ENCODE measurements at regions of chr1 and their contacts with region 1.

Region 1: GRCh38 chr1:229625915-229626831 is at the starts of genes TAF5L and URB2:
- DNase-seq: peak; percentile 87
- H3K4me3 Mint-ChIP-seq: peak within 1 kb of the TSS; percentile 97
- H3K27ac Mint-ChIP-seq: peak within 1 kb of the TSS; percentile 95
- H3K4me1 Mint-ChIP-seq: peaks cover 59% of the 10 kb centered on the region
- H3K27me3 Mint-ChIP-seq: no peaks in the 10 kb centered on the region
- total RNA-seq, gene TAF5L: 35.8 and 37.9 TPM in 2 replicates
- total RNA-seq, gene URB2: 37.3 and 38.4 TPM in 2 replicates

Region 2: GRCh38 chr1:229341774-229342655 is 284.2 kb before region 1 on chr1:
- intact Hi-C with region 1: loop called (anchors 1 kb)
- DNase-seq: peak; percentile 82
- H3K4me3 Mint-ChIP-seq: peak overlapping the region; percentile 89
- H3K27ac Mint-ChIP-seq: peak overlapping the region; percentile 87
- H3K4me1 Mint-ChIP-seq: peaks cover 50% of the 10 kb centered on the region
- H3K27me3 Mint-ChIP-seq: peaks cover 21% of the 10 kb centered on the region

Region 3: GRCh38 chr1:229537894-229538293 is 88.3 kb before region 1 on chr1:
- intact Hi-C with region 1: loop called (anchors 1 kb)
- DNase-seq: no peak
- H3K4me3 Mint-ChIP-seq: no peak overlapping the region
- H3K27ac Mint-ChIP-seq: no peak overlapping the region
- H3K4me1 Mint-ChIP-seq: peaks cover 26% of the 10 kb centered on the region
- H3K27me3 Mint-ChIP-seq: peaks cover 2% of the 10 kb centered on the region

Region 4: DNA sequence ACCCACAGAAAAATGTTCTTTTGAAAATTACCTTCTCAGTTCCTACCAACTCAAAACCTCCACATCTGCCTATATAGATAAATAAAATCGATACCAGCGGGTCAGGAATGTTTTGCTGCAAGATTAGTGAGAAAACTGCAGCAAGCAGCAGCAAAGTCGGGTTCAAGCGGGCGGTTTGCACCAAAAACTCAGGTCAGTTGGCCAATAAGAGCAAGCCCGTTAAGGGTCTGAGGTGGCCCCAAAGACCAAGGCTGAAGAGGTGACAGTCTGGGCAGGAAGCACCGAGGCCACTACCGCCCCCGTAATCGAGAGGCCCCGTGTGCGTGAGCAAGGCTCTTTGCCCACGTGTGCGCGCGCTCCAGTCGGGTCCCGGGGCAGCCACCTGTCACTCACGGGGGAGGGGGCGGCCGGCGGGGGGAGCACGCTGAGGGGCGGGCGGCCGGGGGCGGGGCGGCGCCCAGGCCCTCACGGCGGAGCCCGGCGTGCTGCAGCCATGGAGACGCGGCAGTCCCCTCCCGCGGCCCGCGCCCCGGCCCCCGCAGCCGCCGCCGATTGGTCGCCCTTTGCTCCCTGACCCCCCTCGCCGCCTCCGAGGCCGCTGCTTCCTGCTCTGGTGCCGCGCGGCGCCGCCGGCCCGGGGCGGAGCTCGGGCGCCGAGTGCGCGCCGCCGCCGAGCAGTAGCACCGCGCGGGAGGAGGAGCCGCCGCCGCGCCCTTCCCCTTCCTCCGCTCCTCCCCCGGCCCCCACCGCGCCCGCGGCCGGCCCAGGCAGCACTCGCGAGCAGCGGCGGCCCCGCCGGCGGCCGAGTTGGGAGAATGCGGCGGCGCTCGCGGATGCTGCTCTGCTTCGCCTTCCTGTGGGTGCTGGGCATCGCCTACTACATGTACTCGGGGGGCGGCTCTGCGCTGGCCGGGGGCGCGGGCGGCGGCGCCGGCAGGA is 440.6 kb after region 1 on chr1 and contains the start of gene GALNT2:
- intact Hi-C with region 1: loop called (anchors 1 kb)
- DNase-seq: peak; percentile 88
- H3K4me3 Mint-ChIP-seq: peak within 1 kb of the TSS; percentile 93
- H3K27ac Mint-ChIP-seq: peak within 1 kb of the TSS; percentile 89
- H3K4me1 Mint-ChIP-seq: peaks cover 48% of the 10 kb centered on the region
- H3K27me3 Mint-ChIP-seq: peaks cover 3% of the 10 kb centered on the region
- total RNA-seq, gene GALNT2: 67.6 and 67.9 TPM in 2 replicates

Region 5: GRCh38 chr1:230167419-230167852 is 541.3 kb after region 1 on chr1:
- intact Hi-C with region 1: no loop called
- DNase-seq: peak; percentile 12
- H3K4me3 Mint-ChIP-seq: no peak overlapping the region
- H3K27ac Mint-ChIP-seq: no peak overlapping the region
- H3K4me1 Mint-ChIP-seq: peaks cover 39% of the 10 kb centered on the region
- H3K27me3 Mint-ChIP-seq: no peaks in the 10 kb centered on the region

Region 6: DNA sequence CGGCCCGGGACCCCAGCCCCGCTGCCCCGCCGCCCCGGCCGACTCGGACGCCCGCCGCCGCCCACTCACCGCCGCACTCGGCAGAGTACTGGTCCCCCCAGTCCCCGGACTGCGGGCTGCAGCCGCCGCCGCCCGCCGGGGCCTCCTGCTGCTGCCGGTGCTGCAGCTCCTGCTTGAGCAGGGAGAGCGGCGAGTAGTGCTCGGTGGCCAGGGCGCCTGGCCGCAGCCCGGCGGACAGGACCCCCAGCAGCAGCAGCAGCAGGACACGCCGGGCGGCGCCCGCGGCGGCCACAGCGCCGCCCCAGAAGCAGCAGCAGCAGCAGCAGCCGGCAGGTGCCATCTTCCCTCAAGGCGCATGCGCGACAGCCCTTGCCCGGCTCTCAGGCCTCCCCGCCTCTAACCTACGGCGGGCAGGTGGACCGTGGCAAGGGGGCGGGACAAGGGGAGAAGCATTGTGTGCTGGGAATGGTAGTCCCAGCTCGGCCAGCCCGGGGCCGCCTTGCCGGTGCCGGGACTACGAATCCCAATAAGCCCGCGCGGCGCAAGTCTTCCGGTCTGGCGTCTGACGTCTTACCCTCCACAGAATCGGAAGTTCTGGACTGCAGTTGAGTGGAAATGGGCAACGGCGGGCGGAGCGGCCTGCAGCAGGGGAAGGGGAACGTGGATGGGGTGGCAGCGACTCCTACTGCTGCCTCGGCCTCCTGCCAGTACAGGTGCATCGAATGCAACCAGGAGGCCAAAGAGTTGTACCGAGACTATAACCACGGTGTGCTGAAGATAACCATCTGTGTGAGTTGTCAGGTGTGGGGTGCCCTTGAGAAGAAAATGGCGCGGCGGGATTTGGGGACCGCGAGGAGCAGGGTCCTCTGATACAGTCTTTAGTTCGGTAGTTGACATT is 1352.6 kb after region 1 on chr1 and contains the starts of genes ARV1 and TTC13:
- intact Hi-C with region 1: loop called (anchors 5 kb)
- DNase-seq: peak; percentile 97
- H3K4me3 Mint-ChIP-seq: peak within 1 kb of the TSS; percentile 92
- H3K27ac Mint-ChIP-seq: peak within 1 kb of the TSS; percentile 94
- H3K4me1 Mint-ChIP-seq: peaks cover 33% of the 10 kb centered on the region
- H3K27me3 Mint-ChIP-seq: no peaks in the 10 kb centered on the region
- total RNA-seq, gene ARV1: 14.3 and 14.6 TPM in 2 replicates
- total RNA-seq, gene TTC13: 20.7 and 21.8 TPM in 2 replicates